Activated CD8-positive, alpha-beta memory T cell treated with anti-CD3 and anti-CD28 coated beads, Interleukin-2, amount 10 ng/mL, durations not matched to agents 7 days and 5 days (primary cell): ENCODE measurements at regions of chr12 and their contacts with region 1.

Region 1: DNA sequence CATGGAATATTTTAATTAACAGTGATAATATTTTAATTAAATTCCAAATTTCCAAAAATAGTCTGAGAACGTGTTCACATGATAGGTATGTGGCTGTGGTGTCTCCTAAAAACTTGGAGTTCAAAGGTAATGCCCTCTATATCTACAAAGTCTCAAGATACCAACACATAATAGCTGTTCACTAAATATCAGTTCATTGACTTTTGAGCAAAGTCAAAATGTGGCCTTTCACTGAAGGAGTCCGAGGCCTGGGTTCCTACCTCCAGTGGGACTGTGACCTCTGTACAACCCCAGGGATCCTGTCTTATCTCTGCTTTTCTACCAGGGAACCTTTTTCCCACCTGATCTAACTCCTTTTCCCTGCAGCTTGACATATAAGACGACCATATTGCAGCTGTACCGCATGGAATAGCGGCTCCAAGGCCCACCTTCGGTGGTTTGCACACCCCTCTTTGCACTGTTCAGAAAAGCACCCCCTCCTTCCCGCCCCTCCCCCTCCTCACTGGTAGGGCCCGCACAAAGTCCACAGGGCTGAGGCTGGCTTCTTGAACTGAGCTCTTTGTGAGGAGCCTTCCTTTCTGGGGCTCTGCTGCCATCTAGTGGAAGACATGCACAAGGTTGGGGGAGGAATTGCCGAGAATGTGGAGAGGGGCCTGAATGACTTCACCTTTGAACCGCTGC is 3.1 kb downstream of the CCND2 start:
- DNase-seq: peak; percentile 93
- ATAC-seq: peak; percentile 16
- H3K4me3 Mint-ChIP-seq: peak overlapping the region; percentile 88
- H3K27ac Mint-ChIP-seq: peak overlapping the region; percentile 100
- H3K4me1 Mint-ChIP-seq: peaks cover 57% of the 10 kb centered on the region
- H3K27me3 Mint-ChIP-seq: no peaks in the 10 kb centered on the region

Region 2: GRCh38 chr12:3885277-3886094 is 391.2 kb before region 1 on chr12:
- CTCF ChIA-PET with region 1: interaction called, 94 read pairs
- DNase-seq: peak; percentile 50
- ATAC-seq: peak; percentile 45
- H3K4me3 Mint-ChIP-seq: peak overlapping the region; percentile 0
- H3K27ac Mint-ChIP-seq: no peak overlapping the region
- H3K4me1 Mint-ChIP-seq: peaks cover 9% of the 10 kb centered on the region
- H3K27me3 Mint-ChIP-seq: peaks cover 4% of the 10 kb centered on the region

Region 3: DNA sequence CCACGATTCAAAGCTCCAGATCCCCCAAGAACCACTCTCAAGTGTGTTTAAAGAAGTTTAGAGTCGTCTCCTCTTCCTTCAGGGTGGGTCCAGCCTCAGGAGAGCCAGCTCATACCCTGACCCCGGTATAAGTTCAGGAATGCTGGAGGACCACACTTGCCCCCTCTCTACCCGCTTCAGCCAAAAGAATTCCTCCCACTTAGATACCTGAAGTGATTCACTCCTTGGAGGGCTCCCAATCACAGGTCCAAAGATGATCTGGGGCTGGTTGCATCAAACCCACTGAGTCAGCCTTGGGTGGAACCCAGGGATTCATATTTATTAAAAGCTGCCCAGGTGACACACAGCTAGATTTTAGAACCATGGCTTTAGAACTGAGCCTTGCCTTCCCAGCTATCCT is 269.9 kb before region 1 on chr12:
- CTCF ChIA-PET with region 1: interaction called, 18 read pairs
- DNase-seq: no peak
- ATAC-seq: no peak
- H3K4me3 Mint-ChIP-seq: no peak overlapping the region
- H3K27ac Mint-ChIP-seq: no peak overlapping the region
- H3K4me1 Mint-ChIP-seq: peaks cover 12% of the 10 kb centered on the region
- H3K27me3 Mint-ChIP-seq: no peaks in the 10 kb centered on the region

Region 4: GRCh38 chr12:4107436-4107878 is 169.2 kb before region 1 on chr12:
- CTCF ChIA-PET with region 1: interaction called, 72 read pairs
- DNase-seq: peak; percentile 90
- ATAC-seq: peak; percentile 91
- H3K4me3 Mint-ChIP-seq: peak overlapping the region; percentile 68
- H3K27ac Mint-ChIP-seq: peak overlapping the region; percentile 95
- H3K4me1 Mint-ChIP-seq: peaks cover 64% of the 10 kb centered on the region
- H3K27me3 Mint-ChIP-seq: peaks cover 6% of the 10 kb centered on the region

Region 5: DNA sequence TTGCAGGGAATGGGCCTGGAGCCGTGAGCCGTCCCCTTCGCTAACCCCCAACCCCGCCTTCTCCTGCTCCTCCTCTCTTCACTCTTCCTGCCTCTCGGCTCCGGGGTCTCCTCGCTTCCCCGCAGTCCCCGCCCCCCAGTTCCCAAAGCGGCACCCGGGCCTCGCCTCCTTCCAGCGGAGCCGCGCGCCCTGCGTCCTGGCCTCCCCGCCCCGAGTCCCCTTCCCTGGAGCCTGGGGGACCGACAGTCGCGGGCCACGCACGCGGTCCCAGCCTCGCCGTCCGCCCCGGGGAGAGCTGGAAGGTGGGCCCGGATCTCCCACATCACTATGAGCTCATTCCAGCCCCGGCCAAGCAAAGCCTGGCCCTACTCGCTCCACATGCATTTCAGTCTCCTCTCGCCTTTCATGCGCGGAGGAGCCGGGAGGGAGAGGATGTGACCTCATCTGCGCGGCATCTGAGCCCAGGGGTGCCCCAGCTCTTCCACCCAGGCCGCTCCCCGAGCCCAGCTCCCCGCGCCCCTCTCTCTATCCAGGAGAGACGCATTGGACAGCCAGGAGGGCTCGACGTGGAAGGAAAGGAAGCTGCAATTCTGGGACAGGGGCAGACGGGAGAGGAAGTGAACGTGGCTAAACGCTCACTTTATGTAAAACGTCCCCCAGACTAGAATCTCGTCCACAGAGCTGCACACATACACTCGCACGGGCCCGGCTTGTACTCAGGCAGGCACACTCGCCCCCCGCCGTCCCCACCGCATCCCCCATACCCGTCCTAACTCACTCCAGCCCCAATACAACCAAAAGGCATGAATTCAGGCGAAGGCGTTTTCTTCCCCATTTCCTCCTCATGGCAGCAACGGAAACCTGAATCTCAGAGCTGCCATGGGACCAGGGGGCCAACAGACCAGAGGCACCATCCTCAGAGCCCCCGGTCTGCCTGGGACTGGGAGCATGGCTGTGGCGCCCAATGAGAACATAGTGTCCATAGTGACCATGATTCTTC is 111.8 kb before region 1 on chr12:
- CTCF ChIA-PET with region 1: interaction called, 17 read pairs
- DNase-seq: peak; percentile 81
- ATAC-seq: peak; percentile 93
- H3K4me3 Mint-ChIP-seq: peak overlapping the region; percentile 75
- H3K27ac Mint-ChIP-seq: peak overlapping the region; percentile 93
- H3K4me1 Mint-ChIP-seq: peaks cover 51% of the 10 kb centered on the region
- H3K27me3 Mint-ChIP-seq: no peaks in the 10 kb centered on the region

Region 6: DNA sequence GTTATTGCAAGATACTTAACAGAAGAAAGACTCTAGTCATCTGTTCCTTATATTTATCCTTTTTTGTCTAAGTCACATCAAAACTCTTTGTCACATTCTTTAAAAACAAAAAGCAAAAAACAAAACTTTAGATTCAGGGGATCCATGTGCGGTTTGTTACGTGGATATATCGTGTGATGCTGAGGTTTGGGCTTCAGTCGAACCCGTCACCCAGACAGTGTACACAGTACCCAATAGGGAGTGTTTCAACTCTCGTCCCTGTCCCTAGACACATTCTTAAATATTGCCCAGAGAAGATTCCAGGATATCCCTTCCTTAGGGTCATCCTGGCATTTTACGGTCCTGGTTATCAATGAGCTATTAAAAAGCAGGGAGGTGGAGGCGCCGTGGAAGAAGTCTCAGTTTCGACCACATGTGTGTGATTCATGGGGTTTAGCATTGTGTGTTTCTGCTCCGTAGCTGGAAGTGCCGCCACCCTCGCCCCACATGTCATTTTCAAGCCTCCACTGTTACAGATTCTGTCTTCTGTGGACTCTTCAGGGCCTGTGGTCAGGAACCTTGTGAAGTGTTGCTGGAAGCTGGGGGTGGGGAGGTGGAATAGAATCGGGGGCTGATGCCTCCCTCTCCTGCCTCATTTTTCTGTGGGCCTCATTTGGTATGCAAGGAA is 16.8 kb after region 1 on chr12:
- CTCF ChIA-PET with region 1: interaction called, 38 read pairs
- DNase-seq: peak; percentile 68
- ATAC-seq: peak; percentile 81
- H3K4me3 Mint-ChIP-seq: peak overlapping the region; percentile 25
- H3K27ac Mint-ChIP-seq: peak overlapping the region; percentile 88
- H3K4me1 Mint-ChIP-seq: peaks cover 76% of the 10 kb centered on the region
- H3K27me3 Mint-ChIP-seq: no peaks in the 10 kb centered on the region